Activated B cell treated with CpG ODN at 0.5 μM for 24 hours (primary cell): ENCODE measurements at regions of chr3 and their contacts with region 1.

Region 1: GRCh38 chr3:170908235-170909116 is at the start of gene EIF5A2:
- DNase-seq: peak; percentile 77
- ATAC-seq: peak; percentile 95
- H3K4me3 Mint-ChIP-seq: peak within 1 kb of the TSS; percentile 94
- H3K27ac Mint-ChIP-seq: peak within 1 kb of the TSS; percentile 86
- H3K4me1 Mint-ChIP-seq: peaks cover 18% of the 10 kb centered on the region
- H3K27me3 Mint-ChIP-seq: no peaks in the 10 kb centered on the region
- CTCF ChIP-seq: no peak
- total RNA-seq, gene EIF5A2: 6.1 and 6.9 TPM in 2 replicates

Region 2: DNA sequence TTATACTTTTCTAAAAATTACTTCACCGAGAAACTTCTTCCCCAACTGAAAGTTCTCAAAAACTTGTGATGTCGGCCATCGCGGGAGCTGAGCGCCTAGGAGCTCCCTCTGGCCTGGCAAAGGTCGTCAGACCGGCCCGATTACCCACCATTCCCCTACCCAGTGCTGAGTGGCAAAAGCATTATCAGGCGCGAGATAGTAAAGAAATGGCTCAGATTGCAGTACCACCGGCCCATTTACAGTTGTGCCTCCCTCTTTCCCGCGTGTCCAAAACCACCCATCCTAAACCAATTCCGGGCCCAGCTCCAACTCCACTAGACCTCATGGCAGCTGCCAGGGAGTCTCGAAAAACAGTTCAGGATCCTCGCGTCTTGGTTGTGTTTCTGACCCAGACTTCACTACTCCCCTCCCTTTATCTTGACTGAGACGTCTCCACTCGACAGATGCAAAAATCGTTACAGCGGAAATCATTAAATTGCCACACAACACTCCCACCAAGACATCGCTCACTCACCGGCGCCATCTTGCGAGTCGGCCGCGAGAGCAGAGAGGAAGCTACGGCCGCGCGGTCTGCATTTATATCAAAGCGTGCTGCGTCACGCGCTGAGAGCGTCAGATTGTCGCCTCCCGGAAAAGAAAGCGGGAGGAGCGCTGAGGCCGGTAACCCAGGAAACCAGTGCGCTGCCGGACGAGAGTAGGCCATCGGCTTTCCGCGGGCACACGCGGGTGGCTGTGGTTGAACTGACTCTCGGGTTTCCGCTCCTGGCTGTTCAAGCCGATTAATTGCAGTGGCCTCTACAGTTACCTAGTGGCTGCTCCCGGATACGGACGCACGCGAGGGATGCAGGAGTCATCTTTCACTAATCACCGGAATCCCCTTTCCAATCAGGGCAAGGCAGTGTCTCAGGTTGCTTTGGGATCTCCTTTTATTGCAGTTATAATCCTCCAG is 38.6 kb before region 1 on chr3 and contains the start of gene RPL22L1:
- CTCF ChIA-PET with region 1: interaction called, 3 read pairs
- POLR2A ChIA-PET with region 1: interaction called, 42 read pairs
- intact Hi-C with region 1: loop called (anchors 1 kb)
- DNase-seq: peak; percentile 89
- ATAC-seq: peak; percentile 86
- H3K4me3 Mint-ChIP-seq: peak within 1 kb of the TSS; percentile 95
- H3K27ac Mint-ChIP-seq: peak within 1 kb of the TSS; percentile 97
- H3K4me1 Mint-ChIP-seq: peaks cover 34% of the 10 kb centered on the region
- H3K27me3 Mint-ChIP-seq: no peaks in the 10 kb centered on the region
- CTCF ChIP-seq: no peak
- total RNA-seq, gene RPL22L1: 109 and 124 TPM in 2 replicates